AG04449 (cell line): ENCODE measurements at regions of chr19 and their contacts with region 1.

Region 1: DNA sequence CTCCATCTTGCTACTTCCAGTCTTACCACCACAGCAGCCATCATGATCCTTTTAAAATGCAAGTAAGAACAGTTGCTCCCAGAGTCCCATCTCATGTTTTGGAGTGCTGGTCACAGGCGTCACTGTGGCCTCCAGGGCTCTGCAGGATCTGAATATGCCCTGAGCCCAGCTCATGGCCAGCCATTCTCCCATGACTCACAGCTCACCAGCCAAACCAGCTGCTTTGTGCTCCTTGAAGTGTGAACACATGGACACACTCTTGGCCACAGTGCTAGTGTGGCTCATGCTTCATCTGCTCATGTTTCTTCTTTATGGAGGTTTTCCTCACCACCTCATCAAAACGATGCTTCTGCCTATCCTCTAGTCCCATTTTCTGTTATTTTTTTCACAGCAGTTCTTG is 466.5 kb downstream of the UQCRFS1 start:
- DNase-seq: no peak
- H3K4me3 ChIP-seq: no peak overlapping the region
- CTCF ChIP-seq: no peak

Region 2: DNA sequence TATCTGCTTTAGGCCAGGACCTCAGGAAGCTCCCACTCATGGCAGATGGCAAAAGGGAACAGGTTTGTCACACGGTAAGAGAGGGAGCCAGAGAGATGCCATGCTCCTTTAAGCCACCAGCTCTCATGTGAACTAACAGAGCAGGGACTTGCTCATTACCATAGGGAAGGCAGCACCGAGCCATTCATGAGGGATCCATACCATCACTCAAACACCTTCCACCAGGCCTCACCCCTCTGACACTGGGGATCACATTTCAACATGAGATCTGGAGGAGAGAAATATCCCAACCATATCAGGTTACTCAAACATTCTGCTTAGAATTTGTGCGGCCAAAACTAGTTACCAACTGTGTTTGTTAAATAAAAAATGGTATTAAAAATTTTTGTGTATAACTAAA is 39.5 kb after region 1 on chr19:
- CTCF ChIA-PET with region 1: no interaction called
- POLR2A ChIA-PET with region 1: no interaction called
- DNase-seq: no peak
- H3K4me3 ChIP-seq: no peak overlapping the region
- CTCF ChIP-seq: no peak

Region 3: DNA sequence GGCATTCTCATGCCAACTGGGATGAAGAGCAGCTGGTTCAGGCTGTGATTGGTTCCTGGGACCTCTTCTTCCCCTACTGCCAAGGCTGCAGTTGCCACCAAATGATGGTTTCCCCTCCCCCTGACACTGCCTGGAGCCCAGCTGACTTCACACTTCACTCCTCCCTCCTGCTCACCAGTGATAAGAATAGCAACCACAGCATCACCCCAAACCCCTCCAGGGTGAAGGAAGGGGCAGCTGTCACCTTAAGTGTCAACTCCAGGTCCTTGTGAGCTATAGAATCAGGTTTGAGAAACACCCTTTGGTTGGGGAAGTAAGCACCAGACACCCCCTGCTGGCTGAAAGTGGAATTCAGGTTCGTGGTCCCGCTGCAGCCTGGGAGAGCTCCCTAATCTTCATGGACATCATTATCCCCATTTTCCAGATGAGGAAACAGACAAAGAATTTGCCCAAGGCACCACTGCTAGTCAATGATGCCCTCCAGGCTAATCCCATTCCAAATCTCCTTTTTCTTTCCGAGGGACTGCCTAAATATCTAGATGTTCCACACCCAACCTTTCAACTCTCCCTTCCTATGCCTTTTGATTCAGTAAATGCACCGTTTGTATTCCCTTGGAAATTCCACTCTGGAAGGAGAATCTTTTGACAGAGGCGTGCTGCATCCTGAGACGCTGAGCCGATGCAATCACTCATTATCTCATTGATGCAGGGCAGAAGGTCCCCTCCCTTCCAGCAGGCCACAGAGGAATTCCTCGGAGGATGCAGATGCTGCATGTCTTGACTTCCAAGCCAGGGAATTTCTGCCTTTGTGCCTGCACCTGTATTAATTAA is 517.0 kb after region 1 on chr19:
- CTCF ChIA-PET with region 1: interaction called, 11 read pairs
- POLR2A ChIA-PET with region 1: no interaction called
- DNase-seq: no peak
- H3K4me3 ChIP-seq: no peak overlapping the region
- CTCF ChIP-seq: peak; percentile 71